Activated naive CD4-positive, alpha-beta T cell treated with anti-CD3 and anti-CD28 coated beads for 36 hours (primary cell): ENCODE measurements at regions of chr4 and their contacts with region 1.

Region 1: DNA sequence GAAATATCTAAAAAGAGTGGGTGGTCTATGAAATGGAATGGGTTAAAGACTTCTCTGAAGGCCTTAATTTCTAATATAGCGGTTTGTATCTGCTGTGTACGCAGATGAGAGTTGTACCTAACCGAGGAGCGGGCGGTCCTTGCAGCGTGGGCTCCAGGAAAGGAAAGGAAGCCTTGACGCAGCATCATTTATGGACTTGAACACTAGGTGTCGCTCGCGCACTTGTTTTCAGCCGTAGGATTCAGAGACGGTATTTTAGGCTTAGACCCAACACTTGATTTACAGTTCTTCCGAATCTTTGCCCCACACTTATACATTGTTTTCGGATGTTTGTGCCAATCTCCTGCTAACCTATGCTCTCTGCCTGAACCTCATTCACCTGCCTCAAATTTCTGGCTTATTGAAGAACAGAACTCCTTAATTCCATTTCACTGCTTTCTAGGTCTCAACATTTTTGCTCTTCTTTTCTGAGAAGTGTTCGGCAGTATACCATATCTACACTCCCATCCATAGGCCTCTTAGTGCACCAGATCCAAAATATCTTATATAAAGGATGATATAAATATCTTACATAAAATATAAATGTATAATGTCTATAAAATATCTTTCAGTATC is 48.9 kb upstream of the AADAT start:
- DNase-seq: peak; percentile 83
- H3K4me3 Mint-ChIP-seq: no peak overlapping the region
- H3K27ac Mint-ChIP-seq: no peak overlapping the region
- H3K4me1 Mint-ChIP-seq: peaks cover 4% of the 10 kb centered on the region
- H3K27me3 Mint-ChIP-seq: peaks cover 8% of the 10 kb centered on the region

Region 2: DNA sequence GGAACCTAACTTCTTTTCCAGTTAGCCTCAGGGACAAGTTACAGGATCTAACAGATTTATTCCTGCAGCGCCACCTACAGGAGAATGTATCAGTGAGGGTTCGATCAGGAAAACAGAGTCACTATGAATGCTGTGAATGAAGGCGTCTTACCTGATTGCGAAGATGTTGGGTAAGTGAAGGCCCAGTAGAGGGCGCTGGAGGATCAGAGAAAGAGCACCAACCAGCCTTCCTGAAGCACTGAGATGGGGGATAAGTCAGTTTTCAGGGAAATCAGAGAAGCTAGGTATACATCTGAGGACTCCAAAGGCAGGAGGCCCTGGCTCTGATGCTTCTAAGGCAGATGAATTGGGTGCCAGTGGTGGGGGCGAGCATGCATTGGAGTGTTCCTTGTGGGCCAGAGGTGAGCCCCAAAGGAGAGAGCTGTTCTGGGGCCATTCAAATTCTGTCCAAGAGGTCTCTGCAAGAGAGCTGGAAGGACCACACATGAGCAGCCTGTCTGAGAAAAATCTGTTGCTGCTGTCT is 121.0 kb after region 1 on chr4:
- CTCF ChIA-PET with region 1: interaction called, 12 read pairs
- intact Hi-C with region 1: loop called (anchors 1 kb)
- DNase-seq: peak; percentile 73
- H3K4me3 Mint-ChIP-seq: no peak overlapping the region
- H3K27ac Mint-ChIP-seq: no peak overlapping the region
- H3K4me1 Mint-ChIP-seq: no peaks in the 10 kb centered on the region
- H3K27me3 Mint-ChIP-seq: no peaks in the 10 kb centered on the region

Region 3: GRCh38 chr4:170374770-170375169 is 236.1 kb after region 1 on chr4:
- CTCF ChIA-PET with region 1: no interaction called
- intact Hi-C with region 1: loop called (anchors 10 kb)
- DNase-seq: peak; percentile 7
- H3K4me3 Mint-ChIP-seq: no peak overlapping the region
- H3K27ac Mint-ChIP-seq: no peak overlapping the region
- H3K4me1 Mint-ChIP-seq: no peaks in the 10 kb centered on the region
- H3K27me3 Mint-ChIP-seq: no peaks in the 10 kb centered on the region

Region 4: GRCh38 chr4:170853422-170854021 is 714.8 kb after region 1 on chr4:
- CTCF ChIA-PET with region 1: no interaction called
- intact Hi-C with region 1: loop called (anchors 2 kb)
- DNase-seq: peak; percentile 22
- H3K4me3 Mint-ChIP-seq: no peak overlapping the region
- H3K27ac Mint-ChIP-seq: no peak overlapping the region
- H3K4me1 Mint-ChIP-seq: no peaks in the 10 kb centered on the region
- H3K27me3 Mint-ChIP-seq: no peaks in the 10 kb centered on the region

Region 5: GRCh38 chr4:170931321-170931720 is 792.6 kb after region 1 on chr4:
- CTCF ChIA-PET with region 1: no interaction called
- intact Hi-C with region 1: no loop called
- DNase-seq: no peak
- H3K4me3 Mint-ChIP-seq: no peak overlapping the region
- H3K27ac Mint-ChIP-seq: no peak overlapping the region
- H3K4me1 Mint-ChIP-seq: no peaks in the 10 kb centered on the region
- H3K27me3 Mint-ChIP-seq: no peaks in the 10 kb centered on the region